Mammary epithelial cell (primary cell): ENCODE measurements at regions of chr14 and their contacts with region 1.

Region 1: GRCh38 chr14:45940307-45940706 is 687.3 kb upstream of the MIS18BP1 start:
- DNase-seq: no peak
- H3K4me3 ChIP-seq: no peak overlapping the region
- H3K27ac ChIP-seq: no peak overlapping the region
- H3K4me1 ChIP-seq: no peaks in the 10 kb centered on the region
- H3K27me3 ChIP-seq: no peaks in the 10 kb centered on the region
- CTCF ChIP-seq: peak; percentile 9 to 21

Region 2: DNA sequence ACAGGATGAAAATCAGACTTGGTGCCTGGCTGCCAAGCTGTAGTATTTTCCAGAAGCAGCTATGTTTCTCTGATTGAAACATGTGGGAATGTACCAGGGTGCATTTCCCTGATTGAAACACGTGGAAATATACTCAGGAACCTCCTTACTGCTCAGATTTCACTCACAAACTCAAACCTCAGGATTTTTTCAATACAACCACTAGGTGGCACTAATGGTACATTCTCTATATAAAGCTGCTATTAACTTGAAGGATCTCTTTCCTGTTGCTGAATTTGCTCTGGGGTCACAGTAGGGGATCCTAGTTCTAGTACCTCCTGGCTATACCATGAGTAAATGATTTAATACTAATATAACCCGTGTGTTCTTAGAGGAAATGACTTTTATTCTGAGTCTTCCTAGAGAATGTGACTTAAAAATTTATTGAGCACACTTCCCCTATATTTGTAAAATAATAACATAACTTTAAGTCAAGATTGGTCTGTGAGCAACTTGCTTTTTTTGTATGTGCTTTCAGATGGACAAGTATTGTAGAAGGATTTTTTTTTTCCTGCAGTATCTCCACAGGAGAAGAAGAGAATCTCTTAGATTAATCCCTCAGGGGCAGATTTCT is 513.5 kb before region 1 on chr14:
- CTCF ChIA-PET with region 1: no interaction called
- dilution Hi-C with region 1: no loop called
- in situ Hi-C with region 1: no loop called
- intact Hi-C with region 1: loop called (anchors 2 kb)
- DNase-seq: peak; percentile 49
- H3K4me3 ChIP-seq: no peak overlapping the region
- H3K27ac ChIP-seq: no peak overlapping the region
- H3K4me1 ChIP-seq: no peaks in the 10 kb centered on the region
- H3K27me3 ChIP-seq: no peaks in the 10 kb centered on the region
- CTCF ChIP-seq: peak; percentile 47 to 67

Region 3: GRCh38 chr14:45610318-45610717 is 330.0 kb before region 1 on chr14:
- CTCF ChIA-PET with region 1: interaction called, 3 read pairs
- dilution Hi-C with region 1: no loop called
- in situ Hi-C with region 1: no loop called
- intact Hi-C with region 1: loop called (anchors 1 kb)
- DNase-seq: peak; percentile 33
- H3K4me3 ChIP-seq: no peak overlapping the region
- H3K27ac ChIP-seq: no peak overlapping the region
- H3K4me1 ChIP-seq: no peaks in the 10 kb centered on the region
- H3K27me3 ChIP-seq: no peaks in the 10 kb centered on the region
- CTCF ChIP-seq: peak; percentile 45 to 64

Region 4: DNA sequence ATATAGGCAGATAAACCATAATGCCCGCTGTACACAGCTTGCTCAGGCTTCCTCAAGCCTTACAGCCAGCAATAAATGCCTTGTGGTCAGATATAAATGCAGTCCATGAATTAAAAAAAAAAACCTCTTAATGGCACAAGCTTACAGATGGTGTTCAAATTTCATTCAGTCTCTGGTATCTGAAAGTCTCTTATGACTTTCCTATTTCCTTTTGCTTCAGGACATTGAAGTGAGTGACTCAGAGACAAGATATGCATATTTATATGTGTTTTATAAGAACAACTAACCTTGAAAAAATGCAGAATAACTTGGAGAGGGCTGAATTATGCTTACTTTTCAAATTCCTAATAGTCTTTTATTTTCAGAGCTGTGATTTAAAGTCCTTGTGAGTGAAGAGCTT is 260.5 kb before region 1 on chr14:
- CTCF ChIA-PET with region 1: interaction called, 3 read pairs
- dilution Hi-C with region 1: no loop called
- in situ Hi-C with region 1: no loop called
- intact Hi-C with region 1: loop called (anchors 5 kb)
- DNase-seq: peak; percentile 66
- H3K4me3 ChIP-seq: no peak overlapping the region
- H3K27ac ChIP-seq: peak overlapping the region; percentile 57
- H3K4me1 ChIP-seq: peaks cover 14% of the 10 kb centered on the region
- H3K27me3 ChIP-seq: no peaks in the 10 kb centered on the region
- CTCF ChIP-seq: no peak

Region 5: DNA sequence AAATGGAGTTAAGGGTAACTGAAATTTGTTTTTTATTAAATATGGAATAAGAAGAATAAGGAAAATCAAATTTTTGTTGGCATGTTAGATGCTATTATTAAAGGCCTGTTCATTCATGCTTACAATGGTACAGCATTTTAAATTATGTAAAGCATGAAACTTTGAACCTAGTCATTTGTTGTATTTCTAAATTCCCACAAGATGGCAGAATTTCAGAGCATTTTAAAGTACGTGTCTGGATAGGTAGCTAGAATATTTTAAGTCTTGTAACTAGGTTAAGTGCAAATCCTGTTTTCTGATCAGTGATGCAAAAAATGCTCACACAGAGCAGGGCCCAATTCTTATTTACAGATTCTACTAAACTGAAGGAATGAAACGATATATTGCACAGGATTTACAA is 101.7 kb before region 1 on chr14:
- CTCF ChIA-PET with region 1: no interaction called
- dilution Hi-C with region 1: no loop called
- in situ Hi-C with region 1: loop called in 1 of 2 experiments (anchors 25 kb)
- intact Hi-C with region 1: loop called (anchors 1 kb)
- DNase-seq: peak; percentile 6
- H3K4me3 ChIP-seq: no peak overlapping the region
- H3K27ac ChIP-seq: no peak overlapping the region
- H3K4me1 ChIP-seq: no peaks in the 10 kb centered on the region
- H3K27me3 ChIP-seq: no peaks in the 10 kb centered on the region
- CTCF ChIP-seq: peak; percentile 17 to 49